A673 (cell line): ENCODE measurements at regions of chr5 and their contacts with region 1.

Region 1: DNA sequence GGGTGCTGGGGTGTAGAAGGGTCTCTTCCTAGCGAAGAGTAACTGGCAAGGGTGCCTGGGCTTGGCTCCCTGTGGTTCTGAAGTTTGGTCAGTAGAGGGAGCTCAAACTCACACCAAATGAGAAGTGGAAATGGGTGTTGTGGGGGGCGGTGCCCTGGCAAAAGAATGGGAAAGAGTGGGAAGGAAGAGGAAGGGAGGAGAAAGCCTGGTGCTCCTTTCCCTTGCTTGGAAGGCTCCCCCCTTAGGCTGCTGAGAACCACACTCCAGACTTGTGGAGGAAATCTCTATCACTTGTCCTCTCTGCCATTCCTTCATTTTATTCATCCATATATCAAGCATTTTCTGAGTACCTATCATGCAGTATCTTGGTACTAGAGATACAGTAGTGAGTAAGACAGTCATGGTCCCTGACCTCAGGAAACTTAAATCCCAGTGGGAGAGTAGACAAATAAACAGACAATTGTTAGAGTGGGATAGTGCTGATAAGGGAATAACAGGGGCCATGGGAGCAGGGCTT is 13.0 kb downstream of the SLC4A9 start:
- DNase-seq: peak; percentile 90
- H3K4me3 ChIP-seq: no peak overlapping the region
- H3K27ac ChIP-seq: peak overlapping the region; percentile 42
- H3K4me1 ChIP-seq: peaks cover 3% of the 10 kb centered on the region
- H3K27me3 ChIP-seq: no peaks in the 10 kb centered on the region
- CTCF ChIP-seq: peak; percentile 80

Region 2: DNA sequence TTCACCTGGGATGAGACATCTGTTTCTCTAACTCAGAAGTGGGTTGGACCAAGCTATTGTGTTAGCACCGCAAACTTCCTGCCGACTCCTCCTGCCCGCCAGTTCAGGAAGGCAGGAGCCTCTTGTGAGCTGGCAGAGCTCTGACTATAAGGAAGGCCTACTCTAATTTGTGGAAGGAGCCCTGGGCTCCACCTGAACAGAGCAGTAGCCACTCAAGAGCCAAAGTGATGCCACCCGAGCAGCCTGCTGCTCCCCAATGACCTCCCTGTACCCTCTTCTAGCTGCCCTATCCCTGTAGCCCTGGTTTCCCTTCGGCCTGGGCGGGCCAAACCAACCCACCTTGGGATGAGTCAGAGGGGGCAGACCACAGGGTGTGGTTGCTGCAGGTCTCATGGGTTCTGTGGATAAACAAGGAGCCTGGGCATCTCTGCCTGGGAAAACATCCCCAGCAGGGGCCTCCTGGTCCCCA is 495.9 kb before region 1 on chr5:
- CTCF ChIA-PET with region 1: no interaction called
- POLR2A ChIA-PET with region 1: no interaction called
- intact Hi-C with region 1: no loop called
- DNase-seq: no peak
- H3K4me3 ChIP-seq: no peak overlapping the region
- H3K27ac ChIP-seq: no peak overlapping the region
- H3K4me1 ChIP-seq: no peaks in the 10 kb centered on the region
- H3K27me3 ChIP-seq: no peaks in the 10 kb centered on the region
- CTCF ChIP-seq: no peak

Region 3: GRCh38 chr5:140468188-140468587 is 95.2 kb after region 1 on chr5:
- CTCF ChIA-PET with region 1: no interaction called
- POLR2A ChIA-PET with region 1: interaction called, 27 read pairs
- intact Hi-C with region 1: no loop called
- DNase-seq: no peak
- H3K4me3 ChIP-seq: no peak overlapping the region
- H3K27ac ChIP-seq: no peak overlapping the region
- H3K4me1 ChIP-seq: no peaks in the 10 kb centered on the region
- H3K27me3 ChIP-seq: no peaks in the 10 kb centered on the region
- CTCF ChIP-seq: no peak

Region 4: GRCh38 chr5:140639148-140639979 is 266.3 kb after region 1 on chr5 and contains the start of gene TMCO6:
- CTCF ChIA-PET with region 1: no interaction called
- POLR2A ChIA-PET with region 1: no interaction called
- intact Hi-C with region 1: loop called (anchors 5 kb)
- DNase-seq: peak; percentile 97
- H3K4me3 ChIP-seq: peak within 1 kb of the TSS; percentile 91
- H3K27ac ChIP-seq: peak within 1 kb of the TSS; percentile 93
- H3K4me1 ChIP-seq: peaks cover 17% of the 10 kb centered on the region
- H3K27me3 ChIP-seq: no peaks in the 10 kb centered on the region
- CTCF ChIP-seq: peak; percentile 72
- total RNA-seq, gene TMCO6: 24.1 and 26.5 TPM in 2 replicates

Region 5: DNA sequence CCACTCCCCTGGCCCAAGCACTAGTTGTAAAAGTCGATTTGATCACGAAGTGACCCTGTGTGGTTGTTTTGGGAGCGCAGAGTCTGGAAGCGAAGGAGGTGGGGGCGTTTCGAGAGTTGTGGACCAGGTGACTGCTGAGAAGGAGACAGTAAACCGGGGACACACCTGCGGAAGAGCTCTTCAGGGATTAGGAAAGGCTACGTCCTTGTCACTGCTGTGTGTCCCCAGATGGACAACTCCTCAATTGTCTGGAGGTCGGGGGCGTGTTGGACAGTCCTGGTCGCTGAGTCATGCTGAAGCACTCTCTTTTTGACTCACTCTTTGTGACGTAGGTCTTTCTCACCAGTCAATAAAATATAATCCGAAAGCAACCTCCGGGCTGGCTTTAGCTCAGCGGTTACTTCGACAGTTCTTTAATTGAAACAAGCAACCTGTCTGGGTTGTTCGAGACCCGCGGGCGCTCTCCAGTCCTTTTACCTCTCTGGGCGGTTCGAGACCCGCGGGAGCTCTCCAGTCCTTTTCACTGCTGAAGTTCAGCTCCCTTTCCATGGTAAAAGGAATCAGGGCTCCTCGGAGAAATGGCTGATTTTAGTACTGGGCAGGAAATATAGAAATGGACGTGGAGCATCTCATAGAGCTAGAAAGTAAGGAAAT is 338.0 kb after region 1 on chr5:
- CTCF ChIA-PET with region 1: interaction called, 18 read pairs
- POLR2A ChIA-PET with region 1: no interaction called
- intact Hi-C with region 1: no loop called
- DNase-seq: peak; percentile 98
- H3K4me3 ChIP-seq: peak overlapping the region; percentile 66
- H3K27ac ChIP-seq: peak overlapping the region; percentile 91
- H3K4me1 ChIP-seq: no peaks in the 10 kb centered on the region
- H3K27me3 ChIP-seq: no peaks in the 10 kb centered on the region
- CTCF ChIP-seq: no peak